Spleen (tissue), 13 donors: ENCODE measurements at regions of chr1 and their contacts with region 1.

Region 1: GRCh38 chr1:150621497-150622302 is 7.7 kb downstream of the ENSA start:
- DNase-seq: no peak
- H3K4me3 ChIP-seq: peak overlapping the region in 1 of 8 donors; percentile 27
- H3K27ac ChIP-seq: peak overlapping the region; percentile 42 to 97 (median 68)
- H3K4me1 ChIP-seq: peaks cover 20 to 86% (median 43%) of the 10 kb centered on the region in 6 donors
- H3K27me3 ChIP-seq: no peaks in the 10 kb centered on the region
- CTCF ChIP-seq: peak; percentile 46 to 88 (median 80)
- POLR2A ChIP-seq: no peak

Region 2: GRCh38 chr1:150561974-150562445 is 59.7 kb before region 1 on chr1:
- intact Hi-C with region 1: loop called (anchors 2 kb)
- DNase-seq: peak; percentile 98
- H3K4me3 ChIP-seq: peak overlapping the region; percentile 28 to 78 (median 54)
- H3K27ac ChIP-seq: peak overlapping the region; percentile 93 to 100 (median 100)
- H3K4me1 ChIP-seq: peaks cover 55 to 100% (median 89%) of the 10 kb centered on the region in 6 donors
- H3K27me3 ChIP-seq: no peaks in the 10 kb centered on the region
- CTCF ChIP-seq: no peak
- POLR2A ChIP-seq: peak in 2 of 3 donors; percentile 33 to 58

Region 3: GRCh38 chr1:150579799-150580642 is 41.7 kb before region 1 on chr1:
- intact Hi-C with region 1: loop called (anchors 5 kb)
- DNase-seq: no peak
- H3K4me3 ChIP-seq: peak overlapping the region; percentile 15 to 96 (median 82)
- H3K27ac ChIP-seq: peak overlapping the region; percentile 91 to 100 (median 100)
- H3K4me1 ChIP-seq: peaks cover 19 to 57% (median 38%) of the 10 kb centered on the region in 6 donors
- H3K27me3 ChIP-seq: no peaks in the 10 kb centered on the region
- CTCF ChIP-seq: no peak
- POLR2A ChIP-seq: peak in 1 of 3 donors; percentile 9

Region 4: DNA sequence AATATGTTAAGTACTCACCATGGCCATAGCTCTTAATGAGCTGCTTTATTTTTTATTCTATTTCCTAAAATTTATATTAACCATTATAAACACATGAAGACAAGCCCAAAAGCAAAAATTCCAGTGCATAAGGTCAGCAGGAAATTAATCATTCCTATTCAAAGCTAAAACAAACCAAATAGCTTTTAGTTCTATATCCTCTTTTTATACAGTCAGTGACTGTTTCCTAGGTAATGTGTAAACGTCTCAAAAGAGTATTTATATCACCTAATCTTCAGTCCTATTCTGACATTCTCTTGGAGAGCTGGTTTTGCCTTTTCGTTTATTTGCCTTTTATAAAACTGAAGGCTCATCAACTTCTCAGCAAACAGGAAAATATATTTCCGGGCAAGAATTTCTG is 71.0 kb after region 1 on chr1:
- intact Hi-C with region 1: no loop called
- DNase-seq: no peak
- H3K4me3 ChIP-seq: no peak overlapping the region
- H3K27ac ChIP-seq: peak overlapping the region in 2 of 8 donors; percentile 22 to 30
- H3K4me1 ChIP-seq: peaks cover 12 to 60% (median 33%) of the 10 kb centered on the region in 6 donors
- H3K27me3 ChIP-seq: no peaks in the 10 kb centered on the region
- CTCF ChIP-seq: no peak
- POLR2A ChIP-seq: no peak